ENCODE measurements at regions of chr16 and their contacts with region 1.

Region 1: GRCh38 chr16:29877266-29877961 is 14.4 kb upstream of the CDIPT start:
- DNase-seq: no peak
- ATAC-seq: peak in 1 of 4 donors; percentile 49
- H3K4me3 ChIP-seq: peak overlapping the region in 1 of 12 donors; percentile 10
- H3K27ac ChIP-seq: no peak overlapping the region
- H3K4me1 ChIP-seq: peaks cover 0 to 12% (median 0%) of the 10 kb centered on the region in 12 donors
- H3K27me3 ChIP-seq: peaks cover 17 to 49% (median 34%) of the 10 kb centered on the region in 9 donors
- CTCF ChIP-seq: no peak
- POLR2A ChIP-seq: no peak

Region 2: GRCh38 chr16:29951625-29952365 is 74.4 kb after region 1 on chr16:
- intact Hi-C with region 1: loop called in 2 of 10 experiments (anchors 10 kb)
- DNase-seq: no peak
- ATAC-seq: no peak
- H3K4me3 ChIP-seq: no peak overlapping the region
- H3K27ac ChIP-seq: no peak overlapping the region
- H3K4me1 ChIP-seq: no peaks in the 10 kb centered on the region
- H3K27me3 ChIP-seq: no peaks in the 10 kb centered on the region
- CTCF ChIP-seq: no peak
- POLR2A ChIP-seq: no peak

Region 3: GRCh38 chr16:30032083-30032819 is 154.8 kb after region 1 on chr16:
- intact Hi-C with region 1: loop called in 1 of 10 experiments (anchors 5 kb)
- DNase-seq: no peak
- ATAC-seq: peak in 1 of 4 donors; percentile 29
- H3K4me3 ChIP-seq: no peak overlapping the region
- H3K27ac ChIP-seq: no peak overlapping the region
- H3K4me1 ChIP-seq: peaks cover 0 to 11% (median 0%) of the 10 kb centered on the region in 12 donors
- H3K27me3 ChIP-seq: peaks cover 25 to 86% (median 67%) of the 10 kb centered on the region in 9 donors
- CTCF ChIP-seq: peak; percentile 38 to 63 (median 54)
- POLR2A ChIP-seq: no peak